ENCODE measurements at regions of chr14 and their contacts with region 1.

Region 1: GRCh38 chr14:89618811-89619551 is 201.9 kb upstream of the FOXN3 start:
- DNase-seq: no peak
- ATAC-seq: peak; percentile 88
- H3K4me3 ChIP-seq: peak overlapping the region; percentile 86
- H3K27ac ChIP-seq: peak overlapping the region; percentile 74
- H3K4me1 ChIP-seq: peaks cover 36% of the 10 kb centered on the region
- H3K27me3 ChIP-seq: no peaks in the 10 kb centered on the region
- CTCF ChIP-seq: no peak
- EP300 ChIP-seq: no peak
- POLR2A ChIP-seq: peak; percentile 77
- RAD21 ChIP-seq: peak; percentile 17; the same call in 1 of the 2 replicates

Region 2: GRCh38 chr14:89324501-89325298 is 294.3 kb before region 1 on chr14:
- CTCF ChIA-PET with region 1: no interaction called
- POLR2A ChIA-PET with region 1: no interaction called
- RAD21 ChIA-PET with region 1: no interaction called
- SMC1A ChIA-PET with region 1: no interaction called
- in situ Hi-C with region 1: no loop called
- intact Hi-C with region 1: loop called (anchors 10 kb)
- DNase-seq: no peak
- ATAC-seq: peak; percentile 73
- H3K4me3 ChIP-seq: no peak overlapping the region
- H3K27ac ChIP-seq: peak overlapping the region; percentile 33
- H3K4me1 ChIP-seq: peaks cover 37% of the 10 kb centered on the region
- H3K27me3 ChIP-seq: no peaks in the 10 kb centered on the region
- CTCF ChIP-seq: no peak
- EP300 ChIP-seq: no peak
- POLR2A ChIP-seq: no peak
- RAD21 ChIP-seq: 0 out of 2 replicates have a peak, but pooled peaks have one; percentile 4

Region 3: GRCh38 chr14:89489761-89490437 is 129.1 kb before region 1 on chr14:
- CTCF ChIA-PET with region 1: no interaction called
- POLR2A ChIA-PET with region 1: no interaction called
- RAD21 ChIA-PET with region 1: no interaction called
- SMC1A ChIA-PET with region 1: no interaction called
- in situ Hi-C with region 1: no loop called
- intact Hi-C with region 1: no loop called
- DNase-seq: no peak
- ATAC-seq: no peak
- H3K4me3 ChIP-seq: no peak overlapping the region
- H3K27ac ChIP-seq: no peak overlapping the region
- H3K4me1 ChIP-seq: peaks cover 6% of the 10 kb centered on the region
- H3K27me3 ChIP-seq: no peaks in the 10 kb centered on the region
- CTCF ChIP-seq: no peak
- EP300 ChIP-seq: no peak
- POLR2A ChIP-seq: no peak
- RAD21 ChIP-seq: no peak

Region 4: GRCh38 chr14:89509891-89510290 is 109.1 kb before region 1 on chr14:
- CTCF ChIA-PET with region 1: no interaction called
- POLR2A ChIA-PET with region 1: no interaction called
- RAD21 ChIA-PET with region 1: no interaction called
- SMC1A ChIA-PET with region 1: no interaction called
- in situ Hi-C with region 1: no loop called
- intact Hi-C with region 1: loop called (anchors 5 kb)
- DNase-seq: no peak
- ATAC-seq: no peak
- H3K4me3 ChIP-seq: no peak overlapping the region
- H3K27ac ChIP-seq: peak overlapping the region; percentile 69
- H3K4me1 ChIP-seq: peaks cover 35% of the 10 kb centered on the region
- H3K27me3 ChIP-seq: no peaks in the 10 kb centered on the region
- CTCF ChIP-seq: no peak
- EP300 ChIP-seq: no peak
- POLR2A ChIP-seq: no peak
- RAD21 ChIP-seq: no peak

Region 5: GRCh38 chr14:89641495-89642175 is 22.7 kb after region 1 on chr14:
- CTCF ChIA-PET with region 1: interaction called, 3 read pairs
- POLR2A ChIA-PET with region 1: interaction called, 3 read pairs
- RAD21 ChIA-PET with region 1: interaction called, 9 read pairs
- SMC1A ChIA-PET with region 1: interaction called, 10 read pairs
- in situ Hi-C with region 1: no loop called
- intact Hi-C with region 1: loop called (anchors 2 kb)
- DNase-seq: peak; percentile 79
- ATAC-seq: peak; percentile 98
- H3K4me3 ChIP-seq: peak overlapping the region; percentile 24; the same call in 1 of the 2 replicates
- H3K27ac ChIP-seq: peak overlapping the region; percentile 68
- H3K4me1 ChIP-seq: peaks cover 6% of the 10 kb centered on the region
- H3K27me3 ChIP-seq: no peaks in the 10 kb centered on the region
- CTCF ChIP-seq: no peak
- EP300 ChIP-seq: peak in 1 of 2 experiments; percentile 64; a peak in 1 of 4 replicates
- POLR2A ChIP-seq: no peak
- RAD21 ChIP-seq: 0 out of 2 replicates have a peak, but pooled peaks have one; percentile 0

Region 6: GRCh38 chr14:89681086-89682018 is 62.4 kb after region 1 on chr14:
- CTCF ChIA-PET with region 1: no interaction called
- POLR2A ChIA-PET with region 1: interaction called, 3 read pairs
- RAD21 ChIA-PET with region 1: interaction called, 3 read pairs
- SMC1A ChIA-PET with region 1: interaction called, 3 read pairs
- in situ Hi-C with region 1: no loop called
- intact Hi-C with region 1: loop called (anchors 2 kb)
- DNase-seq: peak; percentile 73
- ATAC-seq: peak; percentile 88
- H3K4me3 ChIP-seq: peak overlapping the region; percentile 54
- H3K27ac ChIP-seq: peak overlapping the region; percentile 75
- H3K4me1 ChIP-seq: peaks cover 10% of the 10 kb centered on the region
- H3K27me3 ChIP-seq: no peaks in the 10 kb centered on the region
- CTCF ChIP-seq: no peak
- EP300 ChIP-seq: peak; percentile 83 to 85
- POLR2A ChIP-seq: no peak
- RAD21 ChIP-seq: no peak

Region 7: DNA sequence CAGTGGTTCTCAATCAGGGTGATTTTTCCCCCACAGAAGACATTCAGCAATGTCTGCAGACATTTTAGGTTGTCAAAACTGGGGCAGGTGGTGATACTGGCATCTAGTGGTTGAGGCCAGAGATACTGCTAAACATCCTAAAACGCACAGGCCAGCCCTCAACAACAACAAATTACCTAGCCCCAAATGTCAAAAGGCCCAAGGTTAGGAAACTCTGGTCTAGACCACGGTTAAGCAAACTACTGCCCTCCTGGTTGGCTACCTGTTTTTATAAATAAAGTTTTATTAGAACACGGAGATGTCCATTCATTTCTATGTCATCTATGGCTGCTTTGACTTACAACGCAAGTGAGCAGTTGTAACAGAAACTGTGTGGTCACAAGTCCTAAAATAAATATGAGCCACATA is 148.9 kb after region 1 on chr14:
- CTCF ChIA-PET with region 1: interaction called, 4 read pairs
- POLR2A ChIA-PET with region 1: no interaction called
- RAD21 ChIA-PET with region 1: no interaction called
- SMC1A ChIA-PET with region 1: no interaction called
- in situ Hi-C with region 1: no loop called
- intact Hi-C with region 1: loop called (anchors 5 kb)
- DNase-seq: peak; percentile 65
- ATAC-seq: peak; percentile 94
- H3K4me3 ChIP-seq: no peak overlapping the region
- H3K27ac ChIP-seq: peak overlapping the region; percentile 56
- H3K4me1 ChIP-seq: peaks cover 22% of the 10 kb centered on the region
- H3K27me3 ChIP-seq: no peaks in the 10 kb centered on the region
- CTCF ChIP-seq: peak; percentile 75 to 87 (median 81)
- EP300 ChIP-seq: 0 out of 4 replicates have a peak, but pooled peaks of 1 of the 2 experiments have one; percentile 29
- POLR2A ChIP-seq: no peak
- RAD21 ChIP-seq: peak; percentile 95